Esophagus squamous epithelium (tissue), 5 donors: ENCODE measurements at regions of chr1 and their contacts with region 1.

Region 1: GRCh38 chr1:156096640-156097391 is 14.6 kb upstream of the MEX3A start:
- DNase-seq: peak; percentile 59
- H3K4me3 ChIP-seq: peak overlapping the region in 1 of 4 donors; percentile 42
- H3K27ac ChIP-seq: peak overlapping the region; percentile 67 to 92 (median 78)
- H3K4me1 ChIP-seq: peaks cover 31 to 52% (median 51%) of the 10 kb centered on the region in 3 donors
- H3K27me3 ChIP-seq: no peaks in the 10 kb centered on the region
- CTCF ChIP-seq: peak; percentile 76 to 98 (median 96)
- POLR2A ChIP-seq: no peak

Region 2: GRCh38 chr1:155893389-155894142 is 203.2 kb before region 1 on chr1:
- intact Hi-C with region 1: no loop called
- DNase-seq: no peak
- H3K4me3 ChIP-seq: no peak overlapping the region
- H3K27ac ChIP-seq: peak overlapping the region; percentile 12 to 82 (median 69)
- H3K4me1 ChIP-seq: peaks cover 0 to 23% (median 16%) of the 10 kb centered on the region in 3 donors
- H3K27me3 ChIP-seq: no peaks in the 10 kb centered on the region
- CTCF ChIP-seq: no peak
- POLR2A ChIP-seq: no peak

Region 3: GRCh38 chr1:156129706-156130581 is 33.1 kb after region 1 on chr1:
- intact Hi-C with region 1: loop called (anchors 2 kb)
- DNase-seq: no peak
- H3K4me3 ChIP-seq: peak overlapping the region in 2 of 4 donors; percentile 17 to 46
- H3K27ac ChIP-seq: peak overlapping the region; percentile 97 to 99 (median 98)
- H3K4me1 ChIP-seq: peaks cover 56 to 63% (median 58%) of the 10 kb centered on the region in 3 donors
- H3K27me3 ChIP-seq: no peaks in the 10 kb centered on the region
- CTCF ChIP-seq: peak; percentile 89 to 99 (median 98)
- POLR2A ChIP-seq: peak in 1 of 4 donors; percentile 16

Region 4: GRCh38 chr1:156146020-156146768 is 49.4 kb after region 1 on chr1:
- intact Hi-C with region 1: no loop called
- DNase-seq: no peak
- H3K4me3 ChIP-seq: peak overlapping the region in 1 of 4 donors; percentile 18
- H3K27ac ChIP-seq: peak overlapping the region in 2 of 4 donors; percentile 11 to 28
- H3K4me1 ChIP-seq: peaks cover 19 to 59% (median 19%) of the 10 kb centered on the region in 3 donors
- H3K27me3 ChIP-seq: peaks cover 0 to 21% (median 0%) of the 10 kb centered on the region in 4 donors
- CTCF ChIP-seq: peak; percentile 72 to 86 (median 77)
- POLR2A ChIP-seq: no peak